Activated naive CD4-positive, alpha-beta T cell treated with anti-CD3 and anti-CD28 coated beads, Interleukin-2, amount 10 ng/mL, durations not matched to agents 7 days and 5 days (primary cell): ENCODE measurements at regions of chr7 and their contacts with region 1.

Region 1: GRCh38 chr7:143214789-143215679 is 6.8 kb upstream of the TAS2R40 start:
- DNase-seq: peak; percentile 69
- H3K4me3 Mint-ChIP-seq: no peak overlapping the region
- H3K27ac Mint-ChIP-seq: no peak overlapping the region
- H3K4me1 Mint-ChIP-seq: no peaks in the 10 kb centered on the region
- H3K27me3 Mint-ChIP-seq: peaks cover 16% of the 10 kb centered on the region

Region 2: GRCh38 chr7:142880876-142881505 is 334.0 kb before region 1 on chr7:
- CTCF ChIA-PET with region 1: interaction called, 16 read pairs
- DNase-seq: peak; percentile 66
- H3K4me3 Mint-ChIP-seq: no peak overlapping the region
- H3K27ac Mint-ChIP-seq: no peak overlapping the region
- H3K4me1 Mint-ChIP-seq: no peaks in the 10 kb centered on the region
- H3K27me3 Mint-ChIP-seq: peaks cover 39% of the 10 kb centered on the region

Region 3: GRCh38 chr7:143013893-143014292 is 201.1 kb before region 1 on chr7:
- CTCF ChIA-PET with region 1: interaction called, 206 read pairs
- DNase-seq: no peak
- H3K4me3 Mint-ChIP-seq: no peak overlapping the region
- H3K27ac Mint-ChIP-seq: no peak overlapping the region
- H3K4me1 Mint-ChIP-seq: no peaks in the 10 kb centered on the region
- H3K27me3 Mint-ChIP-seq: peaks cover 28% of the 10 kb centered on the region

Region 4: DNA sequence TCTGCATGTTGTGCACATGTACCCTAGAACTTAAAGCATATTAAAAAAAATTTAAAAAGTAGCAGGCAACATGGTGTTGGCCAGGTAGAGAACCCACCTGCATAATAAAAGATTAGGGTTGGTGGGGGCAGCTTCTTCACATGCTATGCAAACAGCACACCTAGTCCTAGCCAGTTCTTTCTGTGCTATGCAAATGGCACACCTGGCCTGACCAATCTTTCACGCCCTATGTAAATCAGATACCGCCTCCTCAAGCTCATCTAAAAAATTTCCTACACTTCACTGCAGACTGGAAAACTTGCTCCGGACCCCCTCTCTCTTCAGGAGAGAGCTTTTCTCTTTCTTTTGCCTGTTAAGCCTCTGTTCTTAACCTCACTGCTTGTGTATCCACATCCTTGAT is 97.6 kb before region 1 on chr7:
- CTCF ChIA-PET with region 1: no interaction called
- DNase-seq: no peak
- H3K4me3 Mint-ChIP-seq: no peak overlapping the region
- H3K27ac Mint-ChIP-seq: no peak overlapping the region
- H3K4me1 Mint-ChIP-seq: no peaks in the 10 kb centered on the region
- H3K27me3 Mint-ChIP-seq: no peaks in the 10 kb centered on the region

Region 5: DNA sequence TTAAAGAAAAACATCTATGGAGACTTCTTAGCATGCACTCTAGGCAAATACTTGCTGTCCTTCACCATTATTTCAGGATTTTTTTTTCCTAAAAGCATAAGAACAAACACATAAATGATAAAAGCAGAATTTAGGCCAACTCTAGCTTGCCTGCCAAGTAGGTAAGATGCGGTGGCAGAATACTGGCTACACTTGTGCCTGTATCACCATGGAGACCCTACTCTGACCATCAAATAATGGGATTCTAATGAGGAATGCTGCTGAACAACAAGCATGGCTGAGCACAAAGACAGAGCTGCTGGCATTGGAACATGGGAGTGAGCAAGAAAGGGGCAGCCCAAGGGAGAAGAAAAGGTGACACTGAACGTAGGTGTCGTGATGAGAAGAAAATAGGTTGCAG is 11.6 kb before region 1 on chr7:
- CTCF ChIA-PET with region 1: interaction called, 16 read pairs
- DNase-seq: no peak
- H3K4me3 Mint-ChIP-seq: no peak overlapping the region
- H3K27ac Mint-ChIP-seq: no peak overlapping the region
- H3K4me1 Mint-ChIP-seq: peaks cover 12% of the 10 kb centered on the region
- H3K27me3 Mint-ChIP-seq: peaks cover 22% of the 10 kb centered on the region